Activated naive CD4-positive, alpha-beta T cell treated with anti-CD3 and anti-CD28 coated beads for 36 hours (primary cell): ENCODE measurements at regions of chr7 and their contacts with region 1.

Region 1: GRCh38 chr7:35037526-35038339 is 448 bp upstream of the DPY19L1 start:
- DNase-seq: peak; percentile 82
- H3K4me3 Mint-ChIP-seq: peak overlapping the region; percentile 80
- H3K27ac Mint-ChIP-seq: peak overlapping the region; percentile 60
- H3K4me1 Mint-ChIP-seq: peaks cover 22% of the 10 kb centered on the region
- H3K27me3 Mint-ChIP-seq: no peaks in the 10 kb centered on the region

Region 2: DNA sequence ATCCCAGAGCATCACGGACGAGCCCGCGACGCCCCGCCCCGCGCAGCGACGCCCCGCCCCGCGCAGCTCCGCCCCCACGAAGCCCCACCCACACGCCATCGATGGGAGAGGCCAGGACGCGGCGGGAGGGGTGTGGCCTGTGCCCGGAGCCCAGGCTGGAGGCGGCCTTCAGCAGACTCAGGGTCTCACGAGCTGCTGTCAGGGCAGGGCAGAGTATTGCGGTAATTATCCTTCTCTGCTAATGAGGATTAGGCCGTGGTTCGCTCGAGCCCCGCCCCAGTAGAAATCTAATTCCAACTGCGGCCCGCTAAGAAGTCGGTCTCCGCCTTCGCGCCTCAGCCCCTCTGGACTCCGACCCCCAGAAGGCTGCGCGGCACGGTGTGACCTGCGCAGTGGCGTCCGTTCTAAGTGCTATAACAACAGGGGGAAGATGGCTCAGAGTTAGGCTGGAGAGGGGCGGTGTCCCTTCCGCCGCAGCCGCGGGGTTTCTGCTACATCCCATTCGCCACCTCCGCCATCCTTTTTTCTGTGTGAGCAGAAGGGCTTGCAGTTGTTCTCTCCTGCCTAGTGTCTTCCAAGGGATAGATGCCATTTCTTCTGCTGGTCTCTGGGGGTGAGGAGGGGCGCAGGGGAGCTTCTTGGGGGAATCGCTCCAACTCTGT is 1974.8 kb before region 1 on chr7:
- CTCF ChIA-PET with region 1: no interaction called
- intact Hi-C with region 1: loop called (anchors 10 kb)
- DNase-seq: peak; percentile 93
- H3K4me3 Mint-ChIP-seq: peak overlapping the region; percentile 92
- H3K27ac Mint-ChIP-seq: peak overlapping the region; percentile 88
- H3K4me1 Mint-ChIP-seq: peaks cover 30% of the 10 kb centered on the region
- H3K27me3 Mint-ChIP-seq: no peaks in the 10 kb centered on the region

Region 3: DNA sequence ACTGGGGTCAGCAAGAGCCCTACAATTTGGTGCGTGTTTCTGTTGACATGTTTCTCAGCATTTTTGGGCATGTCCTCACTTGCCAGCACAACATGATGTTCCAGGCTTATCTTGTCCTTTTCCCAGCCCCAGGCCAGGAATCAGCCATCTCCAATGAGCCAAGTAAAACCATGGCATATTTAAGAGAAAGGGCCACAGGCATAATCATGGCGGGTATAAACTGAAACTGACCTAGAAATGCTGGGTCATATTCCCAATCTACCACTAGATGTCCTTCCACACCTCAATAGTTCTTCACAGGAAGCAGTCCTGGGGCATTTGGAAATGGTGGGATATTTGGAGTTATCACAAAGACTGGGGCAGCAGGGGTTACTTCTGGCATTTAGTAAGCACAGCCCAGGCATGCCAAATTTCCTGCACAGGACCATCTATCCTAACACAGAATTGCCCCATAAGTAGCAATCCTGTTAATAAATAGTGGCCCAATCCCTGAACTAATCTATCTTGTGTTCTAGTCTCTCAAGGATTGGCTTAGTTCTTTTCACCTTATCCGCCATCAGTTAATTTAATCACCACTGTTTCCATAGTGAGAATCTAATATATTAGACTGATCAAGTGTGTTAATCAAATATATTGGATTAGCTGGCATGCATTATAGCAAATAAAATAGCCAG is 278.1 kb before region 1 on chr7:
- CTCF ChIA-PET with region 1: no interaction called
- intact Hi-C with region 1: loop called (anchors 2 kb)
- DNase-seq: no peak
- H3K4me3 Mint-ChIP-seq: no peak overlapping the region
- H3K27ac Mint-ChIP-seq: no peak overlapping the region
- H3K4me1 Mint-ChIP-seq: no peaks in the 10 kb centered on the region
- H3K27me3 Mint-ChIP-seq: peaks cover 18% of the 10 kb centered on the region

Region 4: GRCh38 chr7:34991938-34992840 is 45.5 kb before region 1 on chr7:
- CTCF ChIA-PET with region 1: interaction called, 3 read pairs
- intact Hi-C with region 1: loop called (anchors 1 kb)
- DNase-seq: peak; percentile 34
- H3K4me3 Mint-ChIP-seq: no peak overlapping the region
- H3K27ac Mint-ChIP-seq: no peak overlapping the region
- H3K4me1 Mint-ChIP-seq: peaks cover 7% of the 10 kb centered on the region
- H3K27me3 Mint-ChIP-seq: no peaks in the 10 kb centered on the region

Region 5: DNA sequence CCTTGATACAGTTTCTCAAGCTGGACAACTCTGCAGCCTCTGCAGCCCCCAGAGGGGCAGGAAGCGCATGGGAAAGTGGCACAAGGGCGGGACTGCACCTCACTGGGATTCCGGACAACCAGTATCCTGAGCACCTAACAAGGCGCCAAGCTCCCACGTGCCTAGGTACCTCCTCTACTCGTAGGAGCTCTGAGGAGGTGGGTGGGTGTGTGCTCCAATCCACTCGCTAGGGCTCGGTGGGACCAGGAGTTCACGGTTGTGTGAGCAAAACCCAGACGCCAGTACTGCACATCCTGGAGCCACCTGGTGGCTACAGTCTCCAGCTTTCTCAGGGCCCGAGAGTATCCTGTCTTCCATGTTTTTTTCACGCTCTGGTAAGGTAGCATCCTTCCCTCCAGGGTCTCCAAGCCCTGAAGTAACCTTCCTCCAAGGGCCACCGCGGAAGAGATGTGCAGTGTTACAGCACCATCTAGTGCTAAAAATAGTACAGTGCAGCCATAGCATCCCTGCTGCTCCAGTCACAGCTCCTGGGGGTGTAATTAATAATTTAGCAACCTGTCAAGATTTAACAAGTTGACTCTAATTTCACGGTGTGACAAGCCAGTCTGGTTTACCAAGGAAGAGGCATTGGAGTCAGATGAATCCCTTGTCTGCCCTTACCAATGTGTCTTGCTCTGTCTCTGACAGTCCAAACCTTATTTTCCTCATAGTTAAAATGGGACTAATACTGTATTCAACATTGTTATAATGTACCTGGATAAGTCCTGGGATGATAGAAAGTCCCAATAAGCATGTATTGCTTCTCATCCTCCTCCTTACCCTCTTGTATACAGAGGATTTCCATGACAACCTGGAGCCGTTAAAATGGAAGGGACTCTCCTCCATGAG is 586.8 kb after region 1 on chr7:
- CTCF ChIA-PET with region 1: no interaction called
- intact Hi-C with region 1: loop called (anchors 1 kb)
- DNase-seq: peak; percentile 51
- H3K4me3 Mint-ChIP-seq: no peak overlapping the region
- H3K27ac Mint-ChIP-seq: no peak overlapping the region
- H3K4me1 Mint-ChIP-seq: peaks cover 2% of the 10 kb centered on the region
- H3K27me3 Mint-ChIP-seq: no peaks in the 10 kb centered on the region

Region 6: DNA sequence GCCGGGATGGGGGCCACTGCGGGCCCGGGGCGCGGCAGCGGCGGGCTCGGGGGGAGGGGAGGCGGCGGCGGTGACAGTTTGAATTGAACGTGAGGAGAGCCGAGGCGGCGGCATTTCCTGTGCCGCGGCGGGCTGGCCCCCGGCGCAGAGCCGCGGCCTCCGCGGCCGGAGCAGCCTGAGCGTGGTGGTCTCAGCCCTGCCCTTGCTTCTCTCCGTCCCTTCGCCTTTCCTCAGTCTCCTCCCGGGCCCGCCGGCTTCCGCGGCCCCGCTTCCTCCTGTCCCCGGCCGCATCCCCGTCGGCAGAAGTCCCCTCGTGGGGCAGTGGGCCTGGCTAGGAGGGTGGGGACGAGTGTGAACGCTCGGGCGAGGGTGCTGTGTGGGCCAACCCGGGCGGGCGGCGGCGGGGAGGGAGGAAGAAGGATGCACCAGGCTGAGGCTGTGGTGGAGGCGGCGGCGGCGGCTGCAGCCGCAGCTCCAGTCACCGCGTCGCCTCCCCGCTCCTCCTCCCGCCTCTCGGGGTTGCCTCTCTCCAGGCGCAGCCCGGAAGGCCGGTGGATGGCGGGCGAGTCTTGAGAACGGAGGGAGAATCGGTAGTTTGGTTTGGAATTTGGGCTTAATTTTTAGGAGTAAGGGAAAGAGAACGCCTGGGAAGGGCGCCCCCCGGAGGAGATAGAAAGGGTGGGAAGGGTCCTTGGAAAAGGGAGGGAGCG is 763.8 kb after region 1 on chr7:
- CTCF ChIA-PET with region 1: no interaction called
- intact Hi-C with region 1: loop called (anchors 2 kb)
- DNase-seq: peak; percentile 75
- H3K4me3 Mint-ChIP-seq: peak overlapping the region; percentile 96
- H3K27ac Mint-ChIP-seq: peak overlapping the region; percentile 97
- H3K4me1 Mint-ChIP-seq: peaks cover 46% of the 10 kb centered on the region
- H3K27me3 Mint-ChIP-seq: no peaks in the 10 kb centered on the region